ENCODE measurements at regions of chr4 and their contacts with region 1.

Region 1: GRCh38 chr4:140373328-140374129 is at the start of gene SCOC:
- DNase-seq: peak; percentile 98
- H3K4me3 Mint-ChIP-seq: no peak within 1 kb of the TSS
- H3K27ac Mint-ChIP-seq: peak within 1 kb of the TSS; percentile 18
- H3K4me1 Mint-ChIP-seq: peaks cover 19% of the 10 kb centered on the region
- H3K27me3 Mint-ChIP-seq: peaks cover 2% of the 10 kb centered on the region
- total RNA-seq, gene SCOC: 24.5 to 25.0 TPM

Region 2: GRCh38 chr4:140427106-140427961 is 53.8 kb after region 1 on chr4 and contains the start of gene CLGN:
- CTCF ChIA-PET with region 1: interaction called, 12 read pairs
- POLR2A ChIA-PET with region 1: no interaction called
- DNase-seq: peak; percentile 45
- H3K4me3 Mint-ChIP-seq: peak within 1 kb of the TSS; percentile 66
- H3K27ac Mint-ChIP-seq: no peak within 1 kb of the TSS
- H3K4me1 Mint-ChIP-seq: peaks cover 9% of the 10 kb centered on the region
- H3K27me3 Mint-ChIP-seq: peaks cover 57% of the 10 kb centered on the region
- total RNA-seq, gene CLGN: 0.25 TPM in 1 of 2 experiments, not detected in the other

Region 3: DNA sequence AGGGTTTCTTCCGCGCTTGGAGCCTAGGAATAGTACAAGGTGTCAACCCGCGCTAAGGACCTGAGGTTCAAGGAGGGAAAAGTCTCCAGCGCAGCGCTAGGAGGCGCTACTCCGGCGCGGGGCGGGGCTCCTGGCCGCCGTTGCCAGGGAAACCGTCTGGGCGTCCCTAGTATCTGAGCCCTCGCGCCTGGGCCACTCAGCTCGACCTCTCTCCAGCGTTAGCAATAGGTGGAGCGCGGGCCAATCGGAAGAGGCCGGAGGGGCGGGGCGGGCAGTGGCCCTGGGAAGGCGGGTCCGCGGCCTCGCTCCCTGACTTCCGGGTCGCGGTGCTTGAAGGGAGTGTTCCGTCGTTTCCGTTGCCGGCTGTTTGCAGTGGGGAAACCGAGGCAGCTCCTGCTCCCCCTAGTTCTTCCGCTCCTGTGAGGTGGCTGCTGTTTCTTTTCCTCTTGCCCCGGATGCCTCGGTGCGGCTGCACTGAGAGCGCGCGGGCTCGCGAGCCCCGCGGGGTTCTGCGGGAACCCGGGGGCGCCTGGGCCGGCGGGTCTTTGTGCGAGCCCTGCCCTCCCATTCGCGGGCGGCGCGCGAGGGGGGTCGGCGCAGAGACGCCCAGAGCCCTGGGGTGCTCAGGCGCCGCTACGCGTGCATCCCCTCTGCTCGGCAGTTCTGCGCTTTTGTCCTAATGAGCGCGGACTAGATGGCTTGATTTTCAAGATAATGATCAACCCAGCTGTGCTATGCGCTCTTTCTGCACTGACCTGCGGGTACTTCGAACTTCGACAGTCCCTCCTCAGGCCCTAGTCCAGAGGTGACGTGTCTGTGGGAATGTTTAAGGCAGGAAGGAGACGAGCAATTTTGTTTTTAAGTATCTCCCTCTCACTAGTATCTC is 150.6 kb after region 1 on chr4 and contains the start of gene ELMOD2:
- CTCF ChIA-PET with region 1: interaction called, 36 read pairs
- POLR2A ChIA-PET with region 1: interaction called, 12 read pairs
- DNase-seq: peak; percentile 98
- H3K4me3 Mint-ChIP-seq: peak within 1 kb of the TSS; percentile 81
- H3K27ac Mint-ChIP-seq: peak within 1 kb of the TSS; percentile 52
- H3K4me1 Mint-ChIP-seq: peaks cover 21% of the 10 kb centered on the region
- H3K27me3 Mint-ChIP-seq: no peaks in the 10 kb centered on the region
- total RNA-seq, gene ELMOD2: 17.0 to 19.3 TPM